ENCODE measurements at regions of chr5 and their contacts with region 1.

Region 1: DNA sequence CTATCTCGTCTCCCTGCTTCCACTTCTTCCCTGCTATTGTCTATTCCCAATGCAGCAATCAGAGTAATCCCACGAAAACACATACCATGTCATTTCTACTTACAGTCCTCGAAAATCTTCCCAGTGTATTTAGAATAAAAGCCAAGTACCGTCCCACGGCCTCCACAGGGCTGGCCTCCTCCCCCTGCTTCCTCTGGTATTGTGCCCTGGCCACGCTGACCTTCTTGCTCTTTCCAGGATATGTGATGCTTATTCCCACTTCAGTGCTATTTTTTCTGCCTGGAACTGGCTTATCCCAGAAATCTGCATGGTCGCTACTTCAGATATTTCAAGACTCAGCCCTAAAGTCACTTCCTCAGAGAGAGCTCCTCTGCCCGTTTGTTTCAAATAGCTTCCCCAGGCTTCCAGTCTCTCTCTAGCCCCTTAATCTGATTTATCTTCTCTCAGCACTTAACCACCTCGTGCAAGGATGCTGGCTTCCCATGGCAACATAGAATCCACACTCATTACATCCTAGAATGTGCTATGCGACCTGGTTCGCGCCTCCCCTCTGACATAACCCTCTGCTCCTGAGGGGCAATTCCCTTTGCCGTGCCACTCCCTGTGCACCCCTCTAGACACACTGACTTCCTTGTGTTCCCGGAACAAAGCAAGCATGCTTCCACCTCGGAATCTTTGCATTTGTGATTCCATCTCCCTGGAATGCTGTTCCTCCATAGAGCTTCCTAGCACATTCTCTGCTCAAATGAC is 365.9 kb downstream of the ZSWIM6 start:
- DNase-seq: no peak
- H3K4me3 ChIP-seq: no peak overlapping the region
- H3K4me3 Mint-ChIP-seq: no peak overlapping the region
- H3K27ac Mint-ChIP-seq: no peak overlapping the region
- H3K4me1 ChIP-seq: no peaks in the 10 kb centered on the region
- H3K4me1 Mint-ChIP-seq: no peaks in the 10 kb centered on the region
- H3K27me3 ChIP-seq: no peaks in the 10 kb centered on the region
- H3K27me3 Mint-ChIP-seq: peaks cover 8% of the 10 kb centered on the region
- CTCF ChIP-seq: no peak

Region 2: DNA sequence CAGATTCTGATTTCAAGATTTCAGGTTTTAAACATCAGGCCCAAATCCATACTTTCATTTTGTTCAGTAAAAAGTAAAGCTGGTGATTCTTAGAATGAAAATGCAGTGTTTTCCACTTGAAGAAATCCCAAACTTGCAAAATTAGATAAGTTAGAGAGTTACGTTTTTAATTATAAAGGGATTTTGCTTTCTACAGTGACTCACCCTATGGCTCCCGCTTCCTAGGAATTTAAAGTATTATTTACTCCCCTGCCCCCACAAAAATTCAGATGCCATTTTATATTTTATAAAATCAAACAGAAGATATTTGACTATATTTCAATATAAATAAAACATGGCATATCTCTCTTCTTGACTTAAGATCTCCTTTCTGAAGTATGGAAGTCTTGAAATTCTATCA is 37.0 kb after region 1 on chr5:
- CTCF ChIA-PET with region 1: no interaction called
- POLR2A ChIA-PET with region 1: no interaction called
- intact Hi-C with region 1: loop called (anchors 1 kb)
- DNase-seq: no peak
- H3K4me3 ChIP-seq: no peak overlapping the region
- H3K4me3 Mint-ChIP-seq: no peak overlapping the region
- H3K27ac Mint-ChIP-seq: no peak overlapping the region
- H3K4me1 ChIP-seq: no peaks in the 10 kb centered on the region
- H3K4me1 Mint-ChIP-seq: no peaks in the 10 kb centered on the region
- H3K27me3 ChIP-seq: no peaks in the 10 kb centered on the region
- H3K27me3 Mint-ChIP-seq: peaks cover 20% of the 10 kb centered on the region
- CTCF ChIP-seq: no peak

Region 3: GRCh38 chr5:61887271-61887670 is 189.3 kb after region 1 on chr5:
- CTCF ChIA-PET with region 1: no interaction called
- POLR2A ChIA-PET with region 1: no interaction called
- intact Hi-C with region 1: no loop called
- DNase-seq: no peak
- H3K4me3 ChIP-seq: no peak overlapping the region
- H3K4me3 Mint-ChIP-seq: no peak overlapping the region
- H3K27ac Mint-ChIP-seq: no peak overlapping the region
- H3K4me1 ChIP-seq: no peaks in the 10 kb centered on the region
- H3K4me1 Mint-ChIP-seq: no peaks in the 10 kb centered on the region
- H3K27me3 ChIP-seq: no peaks in the 10 kb centered on the region
- H3K27me3 Mint-ChIP-seq: peaks cover 8% of the 10 kb centered on the region
- CTCF ChIP-seq: no peak

Region 4: DNA sequence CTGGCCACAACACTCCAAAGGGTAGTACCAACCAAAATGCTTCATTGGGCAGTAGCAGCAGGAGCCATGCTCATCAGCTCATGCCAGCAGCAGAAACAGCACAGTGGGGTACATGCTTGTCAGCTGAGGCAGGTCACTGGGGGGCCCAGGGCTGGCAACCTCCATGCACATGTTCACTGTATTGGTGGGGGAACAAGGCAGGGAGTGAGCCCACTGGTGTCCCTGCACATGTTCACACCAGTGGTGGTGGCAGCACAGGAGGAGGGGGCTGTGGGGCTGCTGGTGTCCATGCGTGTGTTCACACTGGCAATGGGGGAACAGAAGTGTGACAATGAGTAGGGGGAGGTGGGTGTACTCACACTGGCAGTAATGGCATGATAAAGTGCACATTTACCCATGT is 353.8 kb after region 1 on chr5:
- CTCF ChIA-PET with region 1: no interaction called
- POLR2A ChIA-PET with region 1: no interaction called
- intact Hi-C with region 1: no loop called
- DNase-seq: no peak
- H3K4me3 ChIP-seq: no peak overlapping the region
- H3K4me3 Mint-ChIP-seq: no peak overlapping the region
- H3K27ac Mint-ChIP-seq: no peak overlapping the region
- H3K4me1 ChIP-seq: no peaks in the 10 kb centered on the region
- H3K4me1 Mint-ChIP-seq: no peaks in the 10 kb centered on the region
- H3K27me3 ChIP-seq: no peaks in the 10 kb centered on the region; the same call in 1 of the 2 replicates
- H3K27me3 Mint-ChIP-seq: peaks cover 12% of the 10 kb centered on the region
- CTCF ChIP-seq: no peak

Measured in Caco-2 (cell line).